Activated B cell treated with CpG ODN at 0.5 μM for 24 hours (primary cell): ENCODE measurements at regions of chrX and their contacts with region 1.

Region 1: DNA sequence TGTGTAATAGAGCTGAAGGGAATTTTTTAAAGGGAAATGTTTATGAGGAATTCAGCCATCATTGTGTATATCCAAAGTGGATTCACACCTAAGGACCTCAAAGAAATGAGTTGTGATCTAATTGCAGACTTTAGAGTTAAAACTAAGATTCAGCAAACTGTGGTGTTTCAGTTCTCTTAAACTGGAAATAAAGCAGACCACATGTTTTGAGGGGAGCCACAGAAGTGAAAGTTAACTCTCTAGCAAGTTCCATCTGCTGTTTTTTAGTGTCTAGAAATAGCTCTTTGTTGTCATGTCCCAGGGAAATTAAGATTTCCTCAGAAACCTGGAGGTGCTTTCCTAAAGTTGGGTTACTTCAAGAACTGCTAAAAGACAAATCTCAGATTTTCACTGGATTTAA is 97.3 kb upstream of the DDX3X start:
- DNase-seq: no peak
- ATAC-seq: peak; percentile 47
- H3K4me3 Mint-ChIP-seq: no peak overlapping the region
- H3K27ac Mint-ChIP-seq: no peak overlapping the region
- H3K4me1 Mint-ChIP-seq: peaks cover 43% of the 10 kb centered on the region
- H3K27me3 Mint-ChIP-seq: no peaks in the 10 kb centered on the region
- CTCF ChIP-seq: no peak

Region 2: GRCh38 chrX:40580537-40581335 is 655.9 kb before region 1 on chrX and contains the start of gene ATP6AP2:
- CTCF ChIA-PET with region 1: no interaction called
- POLR2A ChIA-PET with region 1: no interaction called
- intact Hi-C with region 1: no loop called
- DNase-seq: peak; percentile 71
- ATAC-seq: peak; percentile 95
- H3K4me3 Mint-ChIP-seq: peak within 1 kb of the TSS; percentile 92
- H3K27ac Mint-ChIP-seq: peak within 1 kb of the TSS; percentile 94
- H3K4me1 Mint-ChIP-seq: peaks cover 27% of the 10 kb centered on the region
- H3K27me3 Mint-ChIP-seq: no peaks in the 10 kb centered on the region
- CTCF ChIP-seq: no peak
- total RNA-seq, gene ATP6AP2: 48.6 and 53.8 TPM in 2 replicates

Region 3: DNA sequence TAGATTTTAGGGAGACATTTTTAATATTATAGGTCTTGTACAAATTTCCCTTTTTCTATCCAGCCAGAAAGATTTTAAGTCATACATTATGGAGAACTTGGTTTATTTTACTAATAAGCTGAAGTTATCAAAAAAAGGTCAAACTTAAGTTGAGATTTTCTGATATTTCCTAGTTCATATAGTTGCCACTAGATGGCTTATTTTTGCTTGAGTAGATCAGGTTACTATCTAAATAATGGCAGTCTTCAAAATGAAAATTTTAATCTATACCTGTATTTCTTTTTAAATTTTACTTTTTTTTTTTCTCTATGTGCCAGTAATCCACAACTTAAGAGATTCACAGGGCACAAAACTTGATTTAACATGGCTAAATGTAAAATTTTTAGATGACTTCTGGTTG is 99.0 kb before region 1 on chrX:
- CTCF ChIA-PET with region 1: no interaction called
- POLR2A ChIA-PET with region 1: no interaction called
- intact Hi-C with region 1: no loop called
- DNase-seq: no peak
- ATAC-seq: no peak
- H3K4me3 Mint-ChIP-seq: no peak overlapping the region
- H3K27ac Mint-ChIP-seq: no peak overlapping the region
- H3K4me1 Mint-ChIP-seq: no peaks in the 10 kb centered on the region
- H3K27me3 Mint-ChIP-seq: no peaks in the 10 kb centered on the region
- CTCF ChIP-seq: no peak

Region 4: DNA sequence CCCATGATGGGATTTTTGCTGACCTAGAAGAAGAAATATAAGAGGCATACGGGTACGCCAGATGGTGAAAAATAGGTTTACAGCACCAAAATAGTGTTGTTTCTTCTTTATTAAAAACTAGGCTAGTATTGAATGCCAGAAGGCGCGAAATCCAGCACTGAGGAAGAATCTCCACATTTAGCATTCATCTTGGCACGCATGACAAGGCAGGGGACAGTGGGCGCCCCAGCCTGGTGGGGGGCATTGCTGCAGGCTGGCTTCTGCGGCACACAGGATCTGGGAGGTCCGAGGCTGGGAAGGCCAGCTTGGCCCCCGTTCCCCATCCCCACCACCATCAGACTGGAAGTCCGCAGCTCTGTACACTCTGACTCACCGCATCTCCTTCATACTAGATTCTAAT is 21.6 kb after region 1 on chrX:
- CTCF ChIA-PET with region 1: no interaction called
- POLR2A ChIA-PET with region 1: no interaction called
- intact Hi-C with region 1: loop called (anchors 2 kb)
- DNase-seq: no peak
- ATAC-seq: no peak
- H3K4me3 Mint-ChIP-seq: no peak overlapping the region
- H3K27ac Mint-ChIP-seq: no peak overlapping the region
- H3K4me1 Mint-ChIP-seq: peaks cover 15% of the 10 kb centered on the region
- H3K27me3 Mint-ChIP-seq: no peaks in the 10 kb centered on the region
- CTCF ChIP-seq: no peak

Region 5: DNA sequence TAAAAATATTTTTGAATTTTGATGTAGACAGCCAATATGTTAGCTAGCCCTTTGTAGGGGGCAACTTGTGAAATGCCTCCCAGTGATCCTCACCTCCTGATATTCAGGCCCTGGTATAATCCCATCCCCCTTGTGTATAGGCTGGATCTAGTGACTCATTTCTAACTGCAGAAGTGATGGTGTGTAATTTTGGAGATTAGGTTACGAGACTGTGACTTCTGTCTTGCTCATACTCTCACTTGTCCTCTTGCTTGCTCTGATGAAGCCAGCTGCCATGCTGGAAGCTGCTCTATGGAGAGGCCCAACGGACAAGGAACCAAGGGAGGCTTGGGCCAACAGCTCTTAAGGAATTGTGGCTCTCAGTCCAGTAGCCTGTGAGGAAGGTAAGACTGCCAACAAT is 549.1 kb after region 1 on chrX:
- CTCF ChIA-PET with region 1: no interaction called
- POLR2A ChIA-PET with region 1: no interaction called
- intact Hi-C with region 1: no loop called
- DNase-seq: no peak
- ATAC-seq: no peak
- H3K4me3 Mint-ChIP-seq: no peak overlapping the region
- H3K27ac Mint-ChIP-seq: no peak overlapping the region
- H3K4me1 Mint-ChIP-seq: peaks cover 13% of the 10 kb centered on the region
- H3K27me3 Mint-ChIP-seq: no peaks in the 10 kb centered on the region
- CTCF ChIP-seq: no peak